Activated naive CD4-positive, alpha-beta T cell treated with anti-CD3 and anti-CD28 coated beads for 36 hours (primary cell): ENCODE measurements at regions of chrX and their contacts with region 1.

Region 1: GRCh38 chrX:132219343-132219768 is at the start of gene RAP2C:
- DNase-seq: peak; percentile 76
- H3K4me3 Mint-ChIP-seq: peak within 1 kb of the TSS; percentile 74
- H3K27ac Mint-ChIP-seq: peak within 1 kb of the TSS; percentile 85
- H3K4me1 Mint-ChIP-seq: peaks cover 15% of the 10 kb centered on the region
- H3K27me3 Mint-ChIP-seq: no peaks in the 10 kb centered on the region
- total RNA-seq, gene RAP2C: 24.5 to 27.4 TPM

Region 2: DNA sequence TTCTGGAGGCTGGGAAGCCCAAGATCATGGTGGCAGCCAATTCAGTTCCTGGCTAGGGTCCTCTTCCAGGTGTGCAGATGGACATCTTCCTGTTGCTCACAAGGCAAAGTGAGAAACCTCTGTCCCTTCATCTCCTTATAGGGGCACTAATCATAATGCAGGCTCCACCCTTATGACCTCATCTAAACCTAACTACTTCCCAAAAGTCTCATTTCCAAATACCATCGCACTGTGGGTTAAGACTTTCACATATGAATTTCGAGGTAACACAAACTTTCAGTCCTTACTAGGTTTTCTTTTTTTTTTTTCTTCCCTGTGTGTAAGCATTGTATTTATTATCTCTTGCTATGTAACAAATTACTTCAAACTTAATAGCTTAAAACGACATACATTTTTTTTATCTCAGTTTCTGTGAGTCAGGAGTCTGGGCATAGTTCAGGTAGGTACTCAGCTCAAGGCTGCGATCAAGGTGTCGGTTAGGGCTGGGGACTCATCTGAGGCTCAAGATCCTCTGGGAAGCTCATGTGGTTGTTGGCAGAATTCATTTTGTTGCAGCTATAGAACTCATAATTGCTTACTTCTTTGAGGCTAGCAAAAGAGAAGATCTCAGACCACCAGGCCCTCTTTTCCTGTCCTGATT is 400.9 kb before region 1 on chrX:
- CTCF ChIA-PET with region 1: interaction called, 3 read pairs
- intact Hi-C with region 1: loop called (anchors 2 kb)
- DNase-seq: no peak
- H3K4me3 Mint-ChIP-seq: no peak overlapping the region
- H3K27ac Mint-ChIP-seq: peak overlapping the region; percentile 68
- H3K4me1 Mint-ChIP-seq: peaks cover 45% of the 10 kb centered on the region
- H3K27me3 Mint-ChIP-seq: no peaks in the 10 kb centered on the region

Region 3: DNA sequence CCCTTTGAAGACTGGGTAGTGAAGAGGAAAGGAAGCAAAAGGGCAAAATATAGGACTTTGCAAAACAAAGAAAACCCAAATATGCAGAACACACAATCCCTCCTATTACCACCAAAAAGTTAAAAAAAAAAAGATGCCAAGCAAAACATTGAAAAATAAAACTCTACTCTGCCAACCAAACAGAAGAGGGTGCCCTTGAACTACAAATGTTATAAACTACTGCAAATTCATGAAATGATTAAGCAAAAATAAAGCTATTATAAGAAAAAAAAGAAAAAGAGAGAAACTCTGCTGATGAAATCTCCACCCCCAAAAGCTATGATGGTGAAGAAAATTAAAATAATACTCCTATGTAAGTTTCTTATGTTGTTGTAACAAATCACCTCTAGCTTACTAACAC is 364.8 kb before region 1 on chrX:
- CTCF ChIA-PET with region 1: interaction called, 3 read pairs
- intact Hi-C with region 1: loop called (anchors 1 kb)
- DNase-seq: no peak
- H3K4me3 Mint-ChIP-seq: no peak overlapping the region
- H3K27ac Mint-ChIP-seq: no peak overlapping the region
- H3K4me1 Mint-ChIP-seq: no peaks in the 10 kb centered on the region
- H3K27me3 Mint-ChIP-seq: no peaks in the 10 kb centered on the region

Region 4: GRCh38 chrX:132022967-132023895 is 196.1 kb before region 1 on chrX and contains the start of gene STK26:
- CTCF ChIA-PET with region 1: interaction called, 4 read pairs
- intact Hi-C with region 1: loop called (anchors 1 kb)
- DNase-seq: peak; percentile 80
- H3K4me3 Mint-ChIP-seq: peak within 1 kb of the TSS; percentile 91
- H3K27ac Mint-ChIP-seq: peak within 1 kb of the TSS; percentile 91
- H3K4me1 Mint-ChIP-seq: peaks cover 31% of the 10 kb centered on the region
- H3K27me3 Mint-ChIP-seq: no peaks in the 10 kb centered on the region
- total RNA-seq, gene STK26: 54.0 to 55.6 TPM

Region 5: GRCh38 chrX:132171478-132172260 is 47.7 kb before region 1 on chrX:
- CTCF ChIA-PET with region 1: interaction called, 4 read pairs
- intact Hi-C with region 1: loop called (anchors 2 kb)
- DNase-seq: no peak
- H3K4me3 Mint-ChIP-seq: no peak overlapping the region
- H3K27ac Mint-ChIP-seq: no peak overlapping the region
- H3K4me1 Mint-ChIP-seq: no peaks in the 10 kb centered on the region
- H3K27me3 Mint-ChIP-seq: peaks cover 2% of the 10 kb centered on the region

Region 6: GRCh38 chrX:132488819-132489577 is 269.6 kb after region 1 on chrX and contains the start of gene MBNL3:
- CTCF ChIA-PET with region 1: no interaction called
- intact Hi-C with region 1: loop called (anchors 1 kb)
- DNase-seq: peak; percentile 63
- H3K4me3 Mint-ChIP-seq: peak within 1 kb of the TSS; percentile 95
- H3K27ac Mint-ChIP-seq: peak within 1 kb of the TSS; percentile 96
- H3K4me1 Mint-ChIP-seq: peaks cover 33% of the 10 kb centered on the region
- H3K27me3 Mint-ChIP-seq: no peaks in the 10 kb centered on the region
- total RNA-seq, gene MBNL3: 14.2 to 15.8 TPM